Lower leg skin (tissue), 4 donors: ENCODE measurements at regions of chr3 and their contacts with region 1.

Region 1: GRCh38 chr3:45760878-45761711 is 35.2 kb downstream of the SLC6A20 start:
- DNase-seq: no peak
- H3K4me3 ChIP-seq: no peak overlapping the region
- CTCF ChIP-seq: no peak
- POLR2A ChIP-seq: no peak

Region 2: DNA sequence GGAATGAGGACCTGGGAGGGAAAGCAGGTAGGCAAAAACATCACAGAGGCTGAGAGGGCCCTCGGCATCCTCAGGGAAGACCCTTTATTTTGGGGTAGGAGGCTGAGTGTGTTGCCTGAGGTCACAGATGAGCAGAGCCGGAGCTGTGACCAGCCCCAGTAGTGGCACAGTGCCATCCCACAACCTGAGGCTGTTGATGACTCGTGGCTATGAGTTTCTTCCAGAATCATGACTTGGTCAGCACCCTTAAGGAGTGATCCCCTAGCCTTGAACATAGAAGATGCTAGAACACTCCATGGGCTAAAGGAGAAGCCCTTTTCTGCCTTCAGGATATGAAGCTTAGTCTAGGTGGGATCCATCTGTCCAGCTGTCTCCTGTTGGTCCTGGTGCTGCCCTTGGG is 162.7 kb after region 1 on chr3:
- intact Hi-C with region 1: loop called (anchors 5 kb)
- DNase-seq: no peak
- H3K4me3 ChIP-seq: no peak overlapping the region
- CTCF ChIP-seq: no peak
- POLR2A ChIP-seq: no peak